Activated B cell treated with CpG ODN at 0.5 μM for 24 hours (primary cell): ENCODE measurements at regions of chr11 and their contacts with region 1.

Region 1: GRCh38 chr11:64787526-64788320 is 9.4 kb upstream of the SF1 start:
- DNase-seq: peak; percentile 57
- ATAC-seq: peak; percentile 74
- H3K4me3 Mint-ChIP-seq: no peak overlapping the region
- H3K27ac Mint-ChIP-seq: peak overlapping the region; percentile 73
- H3K4me1 Mint-ChIP-seq: peaks cover 18% of the 10 kb centered on the region
- H3K27me3 Mint-ChIP-seq: no peaks in the 10 kb centered on the region
- CTCF ChIP-seq: no peak

Region 2: DNA sequence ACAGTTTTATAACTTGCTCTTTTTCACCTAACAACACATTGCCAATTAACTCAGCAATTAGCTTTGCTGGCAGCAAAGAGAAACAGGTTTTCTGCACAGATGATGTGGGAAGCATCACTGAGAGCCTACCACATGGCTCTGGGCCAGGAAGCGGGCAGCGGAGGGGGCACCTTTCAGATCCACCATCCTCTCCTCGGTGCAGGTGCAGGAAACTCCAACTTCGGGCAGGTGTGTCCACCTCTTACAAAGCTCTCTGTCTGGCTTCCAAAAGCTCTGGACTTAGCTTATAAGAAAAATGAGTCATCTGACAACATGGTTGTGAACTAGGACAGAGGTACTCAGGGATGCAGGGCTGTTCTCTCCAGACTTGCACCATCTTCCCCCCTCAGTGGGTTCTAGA is 351.7 kb before region 1 on chr11:
- CTCF ChIA-PET with region 1: no interaction called
- POLR2A ChIA-PET with region 1: no interaction called
- intact Hi-C with region 1: no loop called
- DNase-seq: no peak
- ATAC-seq: no peak
- H3K4me3 Mint-ChIP-seq: no peak overlapping the region
- H3K27ac Mint-ChIP-seq: no peak overlapping the region
- H3K4me1 Mint-ChIP-seq: peaks cover 3% of the 10 kb centered on the region
- H3K27me3 Mint-ChIP-seq: peaks cover 11% of the 10 kb centered on the region
- CTCF ChIP-seq: no peak

Region 3: GRCh38 chr11:64723117-64723906 is 64.4 kb before region 1 on chr11 and contains the start of gene NRXN2:
- CTCF ChIA-PET with region 1: no interaction called
- POLR2A ChIA-PET with region 1: interaction called, 13 read pairs
- intact Hi-C with region 1: no loop called
- DNase-seq: peak; percentile 88
- ATAC-seq: peak; percentile 89
- H3K4me3 Mint-ChIP-seq: peak within 1 kb of the TSS; percentile 81
- H3K27ac Mint-ChIP-seq: peak within 1 kb of the TSS; percentile 76
- H3K4me1 Mint-ChIP-seq: peaks cover 22% of the 10 kb centered on the region
- H3K27me3 Mint-ChIP-seq: peaks cover 30% of the 10 kb centered on the region
- CTCF ChIP-seq: peak; percentile 64
- total RNA-seq, gene NRXN2: 0.54 and 0.73 TPM in 2 replicates

Region 4: DNA sequence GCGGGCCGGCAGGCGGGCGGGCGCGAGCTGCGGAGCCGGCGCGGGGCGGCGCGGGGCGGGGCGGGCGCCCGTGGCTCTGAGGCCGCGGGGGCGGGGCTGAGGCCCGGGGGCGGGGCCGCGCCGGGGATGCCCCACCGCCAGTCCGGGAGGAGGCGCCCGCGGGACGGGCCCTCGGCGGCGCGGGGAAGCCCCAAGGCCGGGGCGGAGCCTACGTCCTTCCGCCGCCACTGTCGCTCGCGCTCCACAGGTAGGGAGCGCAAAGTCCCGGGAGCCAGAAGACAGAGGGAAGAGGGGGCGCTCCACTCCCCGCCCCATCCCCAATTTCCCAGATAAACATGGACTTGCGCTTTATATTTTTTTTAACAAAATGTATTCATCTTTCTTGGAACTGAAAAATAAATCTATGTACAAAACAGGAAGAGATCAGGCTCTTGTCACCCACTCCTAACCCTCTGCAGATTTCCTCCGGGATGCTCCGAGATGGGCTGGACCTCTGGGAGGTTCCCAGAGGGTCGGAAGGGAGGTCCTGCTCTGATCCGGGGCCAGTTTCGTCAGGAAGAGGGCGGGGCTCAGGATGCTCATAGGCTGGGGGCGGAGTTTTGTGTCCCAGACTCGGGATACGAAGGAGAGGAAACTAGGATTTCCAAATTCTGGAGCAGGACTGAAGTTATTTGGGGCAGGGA is 15.6 kb after region 1 on chr11 and contains the start of gene MAP4K2:
- CTCF ChIA-PET with region 1: interaction called, 29 read pairs
- POLR2A ChIA-PET with region 1: interaction called, 63 read pairs
- intact Hi-C with region 1: loop called (anchors 1 kb)
- DNase-seq: peak; percentile 91
- ATAC-seq: peak; percentile 80
- H3K4me3 Mint-ChIP-seq: peak within 1 kb of the TSS; percentile 87
- H3K27ac Mint-ChIP-seq: peak within 1 kb of the TSS; percentile 91
- H3K4me1 Mint-ChIP-seq: peaks cover 52% of the 10 kb centered on the region
- H3K27me3 Mint-ChIP-seq: no peaks in the 10 kb centered on the region
- CTCF ChIP-seq: no peak
- total RNA-seq, gene MAP4K2: 69.1 and 73.6 TPM in 2 replicates

Region 5: DNA sequence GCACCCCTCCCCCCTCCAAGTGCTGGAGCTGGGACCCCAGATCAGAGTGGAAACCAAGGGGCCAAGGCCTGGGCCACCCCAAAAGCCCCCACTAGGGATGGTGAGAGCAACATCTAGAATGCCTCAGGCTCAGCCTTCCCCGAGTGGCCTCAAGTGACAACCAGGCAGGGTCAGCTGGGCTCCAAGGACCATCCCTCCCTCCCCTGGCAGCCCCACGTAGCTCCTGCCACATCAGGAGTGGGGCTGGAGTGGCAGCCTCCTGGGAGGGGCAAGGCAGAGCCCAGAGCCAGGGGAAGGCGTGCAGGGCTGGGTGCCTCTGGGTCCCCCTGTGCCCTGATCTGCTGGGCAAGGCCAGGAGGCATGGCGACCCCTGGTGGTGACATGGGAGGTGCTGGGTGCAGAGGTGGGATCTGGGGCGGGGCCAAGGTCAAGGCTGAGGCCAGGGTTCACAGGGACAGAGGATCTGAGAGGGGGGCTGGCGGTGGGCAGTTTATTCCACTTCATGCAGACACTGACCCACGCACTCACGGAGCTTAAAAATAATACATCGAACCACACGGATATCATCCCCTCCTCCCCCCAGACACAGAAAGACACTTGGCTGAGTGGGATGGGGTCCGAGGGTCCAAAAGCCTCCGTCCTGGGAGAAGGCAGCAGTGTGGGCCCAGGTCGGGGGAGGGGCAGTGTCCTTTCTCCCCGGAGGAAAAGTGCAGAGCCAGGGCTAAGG is 106.5 kb after region 1 on chr11:
- CTCF ChIA-PET with region 1: interaction called, 6 read pairs
- POLR2A ChIA-PET with region 1: no interaction called
- intact Hi-C with region 1: loop called (anchors 1 kb)
- DNase-seq: peak; percentile 93
- ATAC-seq: peak; percentile 99
- H3K4me3 Mint-ChIP-seq: no peak overlapping the region
- H3K27ac Mint-ChIP-seq: no peak overlapping the region
- H3K4me1 Mint-ChIP-seq: peaks cover 26% of the 10 kb centered on the region
- H3K27me3 Mint-ChIP-seq: no peaks in the 10 kb centered on the region
- CTCF ChIP-seq: peak; percentile 67